MCF 10A (cell line): ENCODE measurements at regions of chr22 and their contacts with region 1.

Region 1: GRCh38 chr22:40346178-40347118 is at the start of gene ADSL:
- DNase-seq: peak; percentile 86
- H3K4me3 Mint-ChIP-seq: peak within 1 kb of the TSS; percentile 93
- H3K27ac Mint-ChIP-seq: peak within 1 kb of the TSS; percentile 87
- H3K4me1 Mint-ChIP-seq: peaks cover 23% of the 10 kb centered on the region
- H3K27me3 Mint-ChIP-seq: no peaks in the 10 kb centered on the region
- CTCF ChIP-seq: no peak
- total RNA-seq, gene ADSL: 91.6 and 129 TPM in 2 replicates

Region 2: GRCh38 chr22:39532215-39533071 is 814.0 kb before region 1 on chr22 and contains the start of gene RPS19BP1:
- CTCF ChIA-PET with region 1: interaction called, 9 read pairs
- POLR2A ChIA-PET with region 1: interaction called, 8 read pairs
- intact Hi-C with region 1: loop called (anchors 2 kb)
- DNase-seq: peak; percentile 100
- H3K4me3 Mint-ChIP-seq: peak within 1 kb of the TSS; percentile 97
- H3K27ac Mint-ChIP-seq: peak within 1 kb of the TSS; percentile 87
- H3K4me1 Mint-ChIP-seq: peaks cover 44% of the 10 kb centered on the region
- H3K27me3 Mint-ChIP-seq: no peaks in the 10 kb centered on the region
- CTCF ChIP-seq: no peak
- total RNA-seq, gene RPS19BP1: 104 and 106 TPM in 2 replicates

Region 3: GRCh38 chr22:40024201-40025061 is 322.0 kb before region 1 on chr22:
- CTCF ChIA-PET with region 1: interaction called, 20 read pairs
- POLR2A ChIA-PET with region 1: no interaction called
- intact Hi-C with region 1: no loop called
- DNase-seq: peak; percentile 73
- H3K4me3 Mint-ChIP-seq: no peak overlapping the region
- H3K27ac Mint-ChIP-seq: no peak overlapping the region
- H3K4me1 Mint-ChIP-seq: peaks cover 7% of the 10 kb centered on the region
- H3K27me3 Mint-ChIP-seq: no peaks in the 10 kb centered on the region
- CTCF ChIP-seq: peak; percentile 93

Region 4: DNA sequence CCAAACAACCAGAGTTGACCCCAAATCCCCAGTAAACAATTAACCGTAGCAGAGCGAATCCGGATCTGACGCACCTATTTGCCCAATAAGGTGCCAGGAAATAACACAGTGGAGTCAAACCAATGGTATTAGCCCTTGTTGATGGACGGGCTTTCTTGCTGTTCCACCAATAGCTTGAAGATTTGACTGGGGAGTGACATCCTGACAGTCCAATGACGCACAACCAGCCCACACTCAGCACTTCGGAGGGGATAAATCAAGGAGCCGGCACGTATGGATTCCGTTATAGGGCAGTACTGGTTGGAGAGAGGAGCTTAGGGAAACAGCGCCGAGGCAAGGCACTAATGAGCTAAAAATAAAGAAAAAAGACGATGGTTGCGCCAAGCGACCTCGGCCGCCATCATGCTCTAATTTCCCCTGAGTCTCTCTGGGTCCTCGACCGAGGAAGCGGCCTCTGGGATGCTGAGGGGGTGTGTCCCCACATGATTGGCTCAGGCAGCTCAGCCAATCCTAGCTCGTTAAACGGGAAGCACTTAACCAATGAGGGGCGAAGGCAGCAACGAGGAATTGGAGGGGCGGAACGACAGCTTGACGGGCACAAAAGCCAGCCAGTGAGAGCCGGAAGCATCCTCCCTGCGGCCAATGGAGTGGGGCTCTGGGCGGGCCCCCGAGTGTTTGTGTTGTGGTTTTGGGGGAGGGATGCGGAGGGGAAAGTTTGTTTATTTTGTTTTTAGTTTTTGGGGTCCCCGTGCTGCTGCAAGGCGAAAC is 302.2 kb before region 1 on chr22:
- CTCF ChIA-PET with region 1: interaction called, 14 read pairs
- POLR2A ChIA-PET with region 1: interaction called, 174 read pairs
- intact Hi-C with region 1: loop called (anchors 1 kb)
- DNase-seq: peak; percentile 99
- H3K4me3 Mint-ChIP-seq: peak overlapping the region; percentile 87
- H3K27ac Mint-ChIP-seq: peak overlapping the region; percentile 95
- H3K4me1 Mint-ChIP-seq: peaks cover 52% of the 10 kb centered on the region
- H3K27me3 Mint-ChIP-seq: no peaks in the 10 kb centered on the region
- CTCF ChIP-seq: no peak

Region 5: GRCh38 chr22:40258451-40259046 is 87.9 kb before region 1 on chr22:
- CTCF ChIA-PET with region 1: no interaction called
- POLR2A ChIA-PET with region 1: interaction called, 10 read pairs
- intact Hi-C with region 1: no loop called
- DNase-seq: peak; percentile 91
- H3K4me3 Mint-ChIP-seq: peak overlapping the region; percentile 51
- H3K27ac Mint-ChIP-seq: peak overlapping the region; percentile 93
- H3K4me1 Mint-ChIP-seq: peaks cover 44% of the 10 kb centered on the region
- H3K27me3 Mint-ChIP-seq: no peaks in the 10 kb centered on the region
- CTCF ChIP-seq: no peak

Region 6: DNA sequence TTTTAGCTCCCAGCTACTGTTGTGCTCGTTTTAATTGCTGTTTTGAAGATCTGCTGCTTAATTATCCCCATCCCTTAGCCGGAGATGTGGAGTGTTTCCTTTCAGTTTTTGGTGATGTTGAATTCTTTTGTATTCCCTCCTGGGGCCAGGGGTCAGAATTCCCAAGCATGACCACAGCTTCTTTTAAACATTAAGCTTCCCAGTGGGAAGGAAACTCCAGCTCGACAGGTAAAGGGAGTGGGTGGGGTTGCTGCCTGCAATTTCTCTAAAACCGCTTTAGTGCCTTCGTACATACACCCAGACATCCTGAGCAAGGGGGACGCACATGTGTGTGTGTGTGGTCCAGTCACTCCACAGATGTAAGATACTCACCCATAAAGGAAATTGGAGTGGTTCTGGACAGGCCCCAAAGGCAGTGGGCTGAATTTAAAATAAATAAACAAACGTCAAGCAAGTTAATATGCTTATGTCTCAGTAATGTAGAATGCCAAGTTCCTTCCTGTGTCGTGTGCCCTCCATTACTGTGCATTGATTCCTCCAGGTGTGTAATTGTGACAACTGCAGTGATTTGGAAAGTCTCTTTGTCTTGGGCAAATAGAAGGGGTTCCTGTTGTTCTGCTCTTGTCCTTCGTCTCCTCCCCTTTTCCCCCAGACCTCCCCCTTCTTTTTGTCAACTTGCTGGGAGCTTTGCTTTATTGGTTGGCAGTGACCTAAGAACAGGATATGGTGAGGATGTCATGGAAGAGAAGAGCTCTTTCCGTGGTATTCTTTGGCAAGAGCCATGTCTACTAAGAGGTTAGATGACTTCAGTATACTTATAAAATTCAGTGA is 19.3 kb before region 1 on chr22:
- CTCF ChIA-PET with region 1: interaction called, 3 read pairs
- POLR2A ChIA-PET with region 1: interaction called, 13 read pairs
- intact Hi-C with region 1: no loop called
- DNase-seq: no peak
- H3K4me3 Mint-ChIP-seq: no peak overlapping the region
- H3K27ac Mint-ChIP-seq: no peak overlapping the region
- H3K4me1 Mint-ChIP-seq: no peaks in the 10 kb centered on the region
- H3K27me3 Mint-ChIP-seq: no peaks in the 10 kb centered on the region
- CTCF ChIP-seq: no peak

Region 7: DNA sequence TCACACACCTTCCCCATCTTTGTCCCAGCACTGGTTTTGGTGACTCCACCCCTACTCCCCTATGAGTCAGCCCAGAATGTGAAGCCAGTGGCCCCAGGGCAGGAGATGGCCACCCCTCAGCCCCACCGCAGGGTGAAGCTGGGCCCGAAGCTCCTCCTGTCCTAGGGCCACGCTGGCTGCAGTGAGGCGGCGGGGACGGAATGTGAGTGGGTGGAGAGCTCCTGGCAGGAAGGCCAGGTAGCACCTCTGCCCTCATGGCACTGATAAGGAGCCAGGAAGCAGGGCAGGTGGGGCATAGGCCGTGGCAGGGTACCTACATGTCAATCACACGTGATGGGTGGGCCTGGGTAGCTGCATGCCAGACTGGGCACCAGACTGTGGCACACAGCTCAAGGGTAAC is 63.9 kb after region 1 on chr22:
- CTCF ChIA-PET with region 1: no interaction called
- POLR2A ChIA-PET with region 1: no interaction called
- intact Hi-C with region 1: no loop called
- DNase-seq: peak; percentile 79
- H3K4me3 Mint-ChIP-seq: no peak overlapping the region
- H3K27ac Mint-ChIP-seq: no peak overlapping the region
- H3K4me1 Mint-ChIP-seq: peaks cover 18% of the 10 kb centered on the region
- H3K27me3 Mint-ChIP-seq: no peaks in the 10 kb centered on the region
- CTCF ChIP-seq: no peak